GM12878 (cell line): ENCODE measurements at regions of chrX and their contacts with region 1.

Region 1: DNA sequence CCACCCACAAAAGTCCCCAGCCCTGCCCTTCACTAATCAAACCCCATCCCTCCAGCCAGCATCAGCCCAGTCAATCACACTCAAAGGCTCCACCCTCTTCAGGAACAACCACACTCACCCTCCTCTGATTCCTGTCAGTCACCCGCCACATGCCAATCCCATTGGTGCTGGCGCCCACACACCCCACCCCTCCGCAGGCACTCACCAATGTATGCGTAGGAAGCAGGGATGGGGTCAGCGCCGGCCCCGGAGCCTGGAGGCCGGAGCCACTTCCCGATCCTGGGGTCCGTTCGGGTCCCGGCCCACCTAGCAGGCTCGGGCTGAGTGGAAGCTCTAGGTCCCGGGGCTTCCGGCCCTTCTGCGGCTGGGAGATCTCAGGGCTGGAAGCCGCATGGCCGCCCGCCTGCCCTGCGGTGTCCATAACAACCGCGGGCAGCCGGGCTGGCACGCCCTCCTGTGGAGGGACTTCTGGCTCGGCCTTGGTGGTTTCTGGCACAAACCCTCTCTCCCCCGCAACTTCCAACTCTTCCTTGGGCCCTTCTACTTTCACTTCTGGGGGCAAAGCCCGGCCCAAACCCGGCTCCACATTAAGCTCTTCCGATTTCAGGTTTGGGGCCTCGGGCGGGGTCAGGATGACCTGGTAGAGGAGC is 7.9 kb upstream of the CFP start:
- DNase-seq: no peak
- ATAC-seq: peak; percentile 94
- H3K4me3 ChIP-seq: 0 out of 2 replicates have a peak overlapping the region, but pooled peaks have one; percentile 41
- H3K27ac ChIP-seq: peak overlapping the region; percentile 34; the same call in 1 of the 2 replicates
- H3K4me1 ChIP-seq: peaks cover 20% of the 10 kb centered on the region
- H3K27me3 ChIP-seq: no peaks in the 10 kb centered on the region
- CTCF ChIP-seq: peak in 2 of 3 experiments; percentile 22 to 32; a peak in 1 of 6 replicates
- EP300 ChIP-seq: no peak
- POLR2A ChIP-seq: no peak
- RAD21 ChIP-seq: no peak

Region 2: DNA sequence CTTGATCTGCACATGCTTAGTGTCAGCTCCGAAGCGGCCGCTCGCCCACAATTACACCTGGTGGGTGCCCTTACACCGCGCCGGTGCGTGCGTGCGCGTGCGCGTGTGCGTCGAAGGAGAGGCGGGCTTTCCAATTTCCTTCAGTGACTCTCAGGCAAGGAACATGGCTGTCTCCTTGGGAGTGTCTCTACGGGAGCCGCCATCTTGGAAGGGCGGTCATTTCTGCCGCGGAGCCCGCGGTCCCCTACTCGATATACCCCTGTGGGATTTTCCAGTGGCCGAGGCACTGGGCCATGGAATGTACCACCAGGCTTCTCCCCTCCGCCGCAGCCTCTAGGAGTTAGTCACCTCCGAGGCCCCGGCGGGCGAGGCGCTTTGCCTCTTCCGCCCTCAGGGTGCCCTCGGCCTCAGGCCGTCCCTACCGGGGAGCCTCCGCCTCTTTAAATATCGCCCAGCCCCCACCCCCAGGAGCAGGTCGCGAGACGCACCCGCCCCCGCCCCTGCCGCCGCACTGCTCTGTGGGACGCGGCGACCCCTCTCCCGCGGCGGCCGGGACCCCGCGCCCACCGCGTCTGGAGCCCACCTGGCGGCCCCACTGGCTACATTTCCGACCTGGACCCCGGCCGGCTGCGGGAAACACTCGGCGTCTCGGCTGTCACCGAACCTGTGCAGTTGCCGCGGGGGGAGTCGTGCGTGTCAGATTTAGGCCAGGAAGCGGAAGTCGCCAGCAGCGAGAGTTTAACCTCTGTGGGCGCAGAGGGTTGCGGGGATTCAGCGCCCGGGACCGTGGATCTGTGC is 155.0 kb before region 1 on chrX and contains the start of gene ZNF41:
- CTCF ChIA-PET with region 1: no interaction called
- POLR2A ChIA-PET with region 1: no interaction called
- RAD21 ChIA-PET with region 1: no interaction called
- SMC1A ChIA-PET with region 1: no interaction called
- in situ Hi-C with region 1: no loop called
- intact Hi-C with region 1: loop called (anchors 10 kb)
- DNase-seq: peak; percentile 64
- ATAC-seq: peak; percentile 94
- H3K4me3 ChIP-seq: peak within 1 kb of the TSS; percentile 66
- H3K27ac ChIP-seq: peak within 1 kb of the TSS; percentile 88
- H3K4me1 ChIP-seq: no peaks in the 10 kb centered on the region; the same call in 1 of the 2 replicates
- H3K27me3 ChIP-seq: no peaks in the 10 kb centered on the region
- CTCF ChIP-seq: no peak
- EP300 ChIP-seq: no peak
- POLR2A ChIP-seq: peak; percentile 74
- RAD21 ChIP-seq: no peak
- polyA plus RNA-seq, gene ZNF41: 0.95 to 1.2 TPM

Region 3: GRCh38 chrX:47613082-47613481 is 24.6 kb before region 1 on chrX:
- CTCF ChIA-PET with region 1: no interaction called
- POLR2A ChIA-PET with region 1: no interaction called
- RAD21 ChIA-PET with region 1: no interaction called
- SMC1A ChIA-PET with region 1: no interaction called
- in situ Hi-C with region 1: no loop called
- intact Hi-C with region 1: no loop called
- DNase-seq: no peak
- ATAC-seq: no peak
- H3K4me3 ChIP-seq: no peak overlapping the region
- H3K27ac ChIP-seq: no peak overlapping the region
- H3K4me1 ChIP-seq: no peaks in the 10 kb centered on the region
- H3K27me3 ChIP-seq: no peaks in the 10 kb centered on the region
- CTCF ChIP-seq: no peak
- EP300 ChIP-seq: no peak
- POLR2A ChIP-seq: no peak
- RAD21 ChIP-seq: no peak

Region 4: GRCh38 chrX:47683146-47683828 is 45.6 kb after region 1 on chrX:
- CTCF ChIA-PET with region 1: no interaction called
- POLR2A ChIA-PET with region 1: no interaction called
- RAD21 ChIA-PET with region 1: no interaction called
- SMC1A ChIA-PET with region 1: no interaction called
- in situ Hi-C with region 1: no loop called
- intact Hi-C with region 1: no loop called
- DNase-seq: no peak
- ATAC-seq: no peak
- H3K4me3 ChIP-seq: no peak overlapping the region
- H3K27ac ChIP-seq: no peak overlapping the region
- H3K4me1 ChIP-seq: no peaks in the 10 kb centered on the region
- H3K27me3 ChIP-seq: no peaks in the 10 kb centered on the region
- CTCF ChIP-seq: no peak
- EP300 ChIP-seq: no peak
- POLR2A ChIP-seq: no peak
- RAD21 ChIP-seq: no peak